CD4-positive, alpha-beta memory T cell (primary cell): ENCODE measurements at regions of chr17 and their contacts with region 1.

Region 1: GRCh38 chr17:57084802-57085447 is at the start of gene AKAP1:
- DNase-seq: peak; percentile 93 to 98 (median 98)
- H3K4me3 ChIP-seq: peak within 1 kb of the TSS; percentile 72 to 99
- H3K4me3 Mint-ChIP-seq: peak within 1 kb of the TSS; percentile 91 to 95 (median 92)
- H3K27ac ChIP-seq: peak within 1 kb of the TSS; percentile 83
- H3K27ac Mint-ChIP-seq: peak within 1 kb of the TSS; percentile 93 to 98 (median 95)
- H3K4me1 ChIP-seq: peaks cover 18% of the 10 kb centered on the region
- H3K4me1 Mint-ChIP-seq: peaks cover 22 to 35% (median 27%) of the 10 kb centered on the region in 4 donors
- H3K27me3 ChIP-seq: no peaks in the 10 kb centered on the region
- H3K27me3 Mint-ChIP-seq: no peaks in the 10 kb centered on the region
- total RNA-seq, gene AKAP1: 33.0 to 35.7 TPM

Region 2: DNA sequence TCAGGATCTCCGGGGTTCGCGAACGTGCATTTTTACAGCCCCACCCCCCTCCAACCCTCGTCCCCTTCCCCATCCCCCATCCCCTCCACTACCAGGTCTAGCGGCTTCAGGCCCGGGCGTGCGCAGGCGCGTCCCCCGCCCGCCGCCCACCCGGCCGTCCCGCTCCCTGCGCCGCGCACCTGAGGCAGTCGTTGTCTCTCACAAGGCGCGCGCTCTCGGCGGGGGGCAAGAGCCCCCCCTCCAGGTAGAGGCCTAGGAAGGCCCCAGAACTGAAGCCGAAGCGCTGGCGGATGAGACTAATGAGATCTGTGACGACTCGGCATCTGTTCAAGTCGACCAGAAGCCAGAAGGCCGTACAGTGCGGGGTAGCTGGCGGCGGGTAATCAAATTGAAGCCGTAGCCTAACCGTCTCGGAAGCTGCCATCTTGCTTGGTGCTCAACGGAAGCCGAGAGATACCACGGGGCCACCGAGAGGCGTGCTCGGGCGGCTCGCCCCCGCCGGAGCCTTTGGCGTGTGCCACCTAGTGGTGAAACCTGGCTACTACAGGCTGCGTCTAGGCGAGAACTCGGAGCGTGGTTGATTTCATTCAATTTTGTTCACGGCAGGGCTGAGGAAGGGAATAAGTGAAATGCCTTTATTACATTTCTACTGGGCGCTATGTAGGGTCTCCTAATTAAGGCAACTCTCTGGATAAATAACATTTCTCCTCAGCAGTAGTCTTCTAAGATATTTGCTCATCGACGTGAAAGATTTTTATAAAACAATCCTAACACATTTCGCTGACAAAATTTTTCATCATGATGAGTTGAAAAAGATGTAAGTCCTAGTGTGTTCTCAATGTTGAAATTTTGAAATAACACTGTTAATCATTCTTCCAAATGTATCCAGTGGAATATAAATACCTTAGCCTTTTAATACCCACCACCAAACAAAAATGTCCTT is 124.1 kb before region 1 on chr17 and contains the start of gene COIL:
- CTCF ChIA-PET with region 1: no interaction called
- POLR2A ChIA-PET with region 1: interaction called, 4 read pairs
- intact Hi-C with region 1: loop called (anchors 5 kb)
- DNase-seq: peak; percentile 90 to 93 (median 91)
- H3K4me3 ChIP-seq: peak within 1 kb of the TSS; percentile 81 to 82
- H3K4me3 Mint-ChIP-seq: peak within 1 kb of the TSS; percentile 78 to 91 (median 89)
- H3K27ac ChIP-seq: peak within 1 kb of the TSS; percentile 87
- H3K27ac Mint-ChIP-seq: peak within 1 kb of the TSS; percentile 65 to 96 (median 94)
- H3K4me1 ChIP-seq: peaks cover 20% of the 10 kb centered on the region
- H3K4me1 Mint-ChIP-seq: peaks cover 10 to 29% (median 21%) of the 10 kb centered on the region in 4 donors
- H3K27me3 ChIP-seq: no peaks in the 10 kb centered on the region
- H3K27me3 Mint-ChIP-seq: peaks cover 0 to 1% of the 10 kb centered on the region in 2 donors
- total RNA-seq, gene COIL: 19.1 to 19.6 TPM

Region 3: GRCh38 chr17:57106107-57106835 is 21.3 kb after region 1 on chr17:
- CTCF ChIA-PET with region 1: interaction called, 3 read pairs
- POLR2A ChIA-PET with region 1: interaction called, 10 read pairs
- intact Hi-C with region 1: no loop called
- DNase-seq: no peak
- H3K4me3 ChIP-seq: no peak overlapping the region
- H3K4me3 Mint-ChIP-seq: no peak overlapping the region
- H3K27ac ChIP-seq: no peak overlapping the region
- H3K27ac Mint-ChIP-seq: peak overlapping the region in 2 of 7 donors; percentile 7 to 79
- H3K4me1 ChIP-seq: peaks cover 9% of the 10 kb centered on the region
- H3K4me1 Mint-ChIP-seq: peaks cover 9 to 17% (median 13%) of the 10 kb centered on the region in 4 donors
- H3K27me3 ChIP-seq: no peaks in the 10 kb centered on the region
- H3K27me3 Mint-ChIP-seq: no peaks in the 10 kb centered on the region

Region 4: GRCh38 chr17:57255776-57256681 is 171.1 kb after region 1 on chr17 and contains the start of gene MSI2:
- CTCF ChIA-PET with region 1: no interaction called
- POLR2A ChIA-PET with region 1: no interaction called
- intact Hi-C with region 1: loop called (anchors 2 kb)
- DNase-seq: peak; percentile 88 to 95 (median 89)
- H3K4me3 ChIP-seq: peak within 1 kb of the TSS; percentile 62 to 72
- H3K4me3 Mint-ChIP-seq: peak within 1 kb of the TSS; percentile 87 to 97 (median 94)
- H3K27ac ChIP-seq: peak within 1 kb of the TSS; percentile 77
- H3K27ac Mint-ChIP-seq: peak within 1 kb of the TSS; percentile 88 to 99 (median 94)
- H3K4me1 ChIP-seq: peaks cover 38% of the 10 kb centered on the region
- H3K4me1 Mint-ChIP-seq: peaks cover 34 to 62% (median 42%) of the 10 kb centered on the region in 4 donors
- H3K27me3 ChIP-seq: no peaks in the 10 kb centered on the region
- H3K27me3 Mint-ChIP-seq: no peaks in the 10 kb centered on the region
- total RNA-seq, gene MSI2: 107 to 110 TPM

Region 5: GRCh38 chr17:58082870-58083490 is 998.1 kb after region 1 on chr17 and contains the start of gene DYNLL2:
- CTCF ChIA-PET with region 1: no interaction called
- POLR2A ChIA-PET with region 1: interaction called, 3 read pairs
- intact Hi-C with region 1: loop called (anchors 5 kb)
- DNase-seq: peak; percentile 86 to 89 (median 88)
- H3K4me3 ChIP-seq: peak within 1 kb of the TSS; percentile 79 to 85
- H3K4me3 Mint-ChIP-seq: peak within 1 kb of the TSS; percentile 91 to 95 (median 94)
- H3K27ac ChIP-seq: peak within 1 kb of the TSS; percentile 80
- H3K27ac Mint-ChIP-seq: peak within 1 kb of the TSS; percentile 91 to 95 (median 93)
- H3K4me1 ChIP-seq: peaks cover 40% of the 10 kb centered on the region
- H3K4me1 Mint-ChIP-seq: peaks cover 20 to 41% (median 35%) of the 10 kb centered on the region in 4 donors
- H3K27me3 ChIP-seq: no peaks in the 10 kb centered on the region
- H3K27me3 Mint-ChIP-seq: peaks cover 0 to 10% of the 10 kb centered on the region in 2 donors
- total RNA-seq, gene DYNLL2: 45.6 to 45.8 TPM